Posterior cingulate gyrus (tissue), 11 donors: ENCODE measurements at regions of chr2 and their contacts with region 1.

Region 1: GRCh38 chr2:214575030-214575939 is 164.4 kb downstream of the VWC2L start:
- DNase-seq: peak; percentile 64 to 96 (median 72)

Region 2: GRCh38 chr2:213806125-213806726 is 769.1 kb before region 1 on chr2:
- intact Hi-C with region 1: loop called (anchors 5 kb)
- DNase-seq: no peak

Region 3: GRCh38 chr2:214322662-214323061 is 252.6 kb before region 1 on chr2:
- intact Hi-C with region 1: loop called (anchors 10 kb)
- DNase-seq: no peak

Region 4: GRCh38 chr2:214341646-214342045 is 233.6 kb before region 1 on chr2:
- intact Hi-C with region 1: no loop called
- DNase-seq: no peak

Region 5: DNA sequence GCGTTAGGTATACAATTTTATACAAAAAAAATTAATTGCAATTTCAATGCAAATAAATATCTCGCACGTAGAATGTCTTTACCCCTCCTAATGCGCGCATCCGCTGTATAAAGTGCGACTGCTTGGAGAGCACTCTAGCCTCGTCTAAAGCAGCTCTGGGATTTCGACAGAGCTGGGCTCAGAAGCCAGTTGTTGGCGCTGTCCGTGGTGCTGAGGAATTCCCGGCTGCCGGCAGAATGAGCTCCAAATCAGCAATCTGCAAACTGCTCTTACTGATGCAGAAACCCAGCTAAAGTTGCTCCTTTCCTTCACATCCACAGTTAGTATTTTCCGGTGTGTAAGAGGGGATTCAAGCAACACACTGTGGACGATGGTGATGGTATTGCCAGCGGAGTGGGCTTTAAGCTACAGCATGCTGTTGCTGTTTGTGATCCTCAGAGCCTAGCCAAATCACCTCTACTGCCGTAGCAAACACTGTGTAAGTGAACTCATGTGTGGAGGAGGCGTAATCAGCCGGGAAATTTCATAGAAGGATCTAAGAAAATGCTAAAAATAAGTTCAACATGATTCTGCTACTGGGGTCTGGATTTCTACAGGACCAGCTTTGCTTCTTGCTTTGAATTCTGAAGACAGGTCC is 164.2 kb before region 1 on chr2 and contains the start of gene VWC2L:
- intact Hi-C with region 1: loop called (anchors 10 kb)
- DNase-seq: peak; percentile 77 to 97 (median 86)

Region 6: DNA sequence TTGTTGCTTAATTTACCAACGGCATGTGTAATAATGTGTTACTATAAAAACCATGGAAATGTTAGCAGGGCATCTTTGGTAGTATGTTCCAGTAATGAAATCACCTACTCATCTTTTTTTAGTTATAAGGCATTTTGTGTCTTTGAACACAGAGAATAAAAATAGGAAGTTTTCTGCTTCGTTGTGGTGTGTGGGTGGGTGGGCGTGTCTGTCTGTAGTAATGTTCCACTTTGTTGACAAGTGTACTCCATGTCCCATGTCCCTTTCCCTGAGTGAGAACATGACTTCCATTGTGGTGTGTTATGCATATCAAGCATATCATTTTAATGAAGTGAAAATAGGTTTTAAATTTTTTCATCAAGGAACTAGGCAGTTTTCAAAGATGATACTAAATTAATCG is 15.1 kb before region 1 on chr2:
- intact Hi-C with region 1: no loop called
- DNase-seq: no peak